Heart right ventricle (tissue), 16 donors: ENCODE measurements at regions of chr1 and their contacts with region 1.

Region 1: GRCh38 chr1:85297855-85298629 is 21.6 kb upstream of the BCL10 start:
- DNase-seq: peak in 1 of 2 donors; percentile 89
- ATAC-seq: peak; percentile 82 to 97 (median 88)
- H3K4me3 ChIP-seq: peak overlapping the region in 4 of 10 donors; percentile 3 to 18 (median 14)
- H3K27ac ChIP-seq: peak overlapping the region in 9 of 10 donors; percentile 27 to 73 (median 60)
- H3K4me1 ChIP-seq: peaks cover 0 to 26% (median 13%) of the 10 kb centered on the region in 9 donors
- H3K27me3 ChIP-seq: no peaks in the 10 kb centered on the region
- CTCF ChIP-seq: no peak

Region 2: DNA sequence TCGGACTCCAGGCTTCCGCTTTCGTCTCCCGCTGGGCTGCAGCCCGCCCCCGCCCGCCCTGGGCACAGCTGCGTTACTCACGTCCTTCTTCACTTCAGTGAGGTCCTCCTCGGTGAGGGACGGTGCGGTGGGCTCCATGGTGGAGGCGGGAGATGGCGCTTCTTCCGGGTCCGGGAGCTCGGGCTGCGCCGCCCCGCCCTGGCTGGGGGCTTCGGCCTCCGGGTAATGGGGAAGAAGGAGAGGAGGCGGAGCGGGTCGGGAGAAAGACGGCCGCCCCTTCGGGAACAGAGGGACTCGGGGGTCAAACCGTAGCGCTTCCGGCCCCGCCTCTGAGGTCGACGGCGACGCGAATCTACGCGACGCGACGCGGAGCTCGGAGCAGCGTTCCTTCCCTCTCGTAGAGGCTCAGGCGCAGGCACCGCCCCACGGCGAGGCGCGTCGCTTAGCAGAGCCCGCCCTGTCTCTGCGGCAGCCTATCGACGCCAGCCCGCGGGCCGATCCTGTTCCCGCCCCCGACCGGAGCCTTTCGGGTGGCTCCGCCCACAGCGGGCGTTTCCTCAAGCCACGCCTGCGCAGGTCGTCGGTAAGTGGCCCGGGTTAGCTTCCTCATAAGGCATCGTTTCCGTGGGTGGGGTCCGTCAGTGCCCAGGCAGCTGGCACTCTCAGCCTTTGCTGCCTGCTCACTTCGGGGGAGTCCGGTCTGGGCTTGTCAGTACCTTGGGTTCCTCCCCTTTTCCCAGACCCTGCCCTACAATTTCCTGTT is 21.6 kb before region 1 on chr1 and contains the start of gene BCL10:
- intact Hi-C with region 1: loop called in 1 of 10 experiments (anchors 1 kb)
- DNase-seq: peak; percentile 97 to 99
- ATAC-seq: peak; percentile 98 to 100 (median 99)
- H3K4me3 ChIP-seq: peak within 1 kb of the TSS; percentile 68 to 98 (median 90)
- H3K27ac ChIP-seq: peak within 1 kb of the TSS; percentile 82 to 99 (median 96)
- H3K4me1 ChIP-seq: peaks cover 12 to 67% (median 36%) of the 10 kb centered on the region in 9 donors
- H3K27me3 ChIP-seq: no peaks in the 10 kb centered on the region
- CTCF ChIP-seq: no peak
- total RNA-seq, gene BCL10: 6.2 to 15.3 (median 9.4) TPM